Astrocyte of the cerebellum (primary cell): ENCODE measurements at regions of chr19 and their contacts with region 1.

Region 1: DNA sequence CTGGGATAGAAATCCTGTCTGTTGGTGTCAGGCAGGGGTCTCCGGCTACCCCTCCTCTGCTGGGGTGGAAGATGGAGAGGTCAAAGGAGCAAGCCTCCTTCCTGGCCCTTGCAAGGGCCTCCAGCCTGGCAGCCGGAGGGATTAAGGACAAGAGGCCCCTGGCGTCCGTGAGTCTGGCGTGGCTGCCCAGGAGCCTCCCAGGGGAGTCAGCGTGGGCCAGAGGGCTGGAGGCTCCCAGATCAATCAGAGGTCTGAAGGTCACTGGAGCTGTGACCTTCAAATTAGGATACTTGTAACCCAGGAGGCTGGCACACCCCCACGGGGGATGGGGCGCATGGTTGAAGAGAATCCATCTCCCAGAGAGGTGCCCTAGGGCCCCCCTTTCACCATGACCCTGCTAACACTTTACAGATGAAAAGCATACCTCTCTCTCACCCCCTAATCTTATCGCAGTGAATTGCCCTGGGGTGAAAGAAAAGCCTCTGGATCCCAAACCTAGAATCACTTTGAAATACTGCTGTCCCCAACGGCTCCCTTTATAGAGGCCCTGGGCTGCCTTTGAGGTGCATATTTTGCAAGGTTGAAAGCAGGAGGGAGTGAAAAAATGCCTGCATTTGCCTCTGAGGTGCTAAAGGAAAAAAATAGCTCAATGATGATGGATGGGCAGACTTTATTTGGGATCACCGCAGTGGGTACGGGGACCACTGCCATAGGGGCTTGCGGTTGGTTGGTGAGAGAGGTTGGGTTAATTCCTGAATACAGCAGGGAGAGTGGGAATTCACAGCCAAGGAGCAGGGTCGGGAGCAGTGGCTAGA is 44.9 kb upstream of the PEG3 start:
- DNase-seq: no peak
- H3K4me3 ChIP-seq: no peak overlapping the region
- CTCF ChIP-seq: no peak

Region 2: DNA sequence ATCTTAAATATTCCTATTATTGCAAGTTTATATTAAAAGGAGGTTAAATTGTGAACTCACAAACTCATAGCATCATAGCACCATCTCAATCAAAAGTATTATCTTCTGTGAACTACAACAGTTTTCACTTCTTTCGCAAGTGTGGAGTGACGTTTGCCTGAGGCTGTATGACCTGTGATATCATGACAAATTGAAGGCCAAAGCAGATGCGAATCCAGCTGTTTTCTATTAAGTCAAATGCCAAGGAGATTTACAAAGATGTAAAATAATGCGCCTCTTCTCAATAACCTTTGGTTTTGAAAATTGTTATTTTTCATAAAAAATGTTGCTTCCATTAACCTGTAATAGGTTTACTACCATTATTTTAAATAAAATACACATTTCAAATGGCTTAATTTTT is 37.2 kb before region 1 on chr19:
- in situ Hi-C with region 1: loop called (anchors 5 kb)
- DNase-seq: no peak
- H3K4me3 ChIP-seq: no peak overlapping the region
- CTCF ChIP-seq: no peak